ENCODE measurements at regions of chr3 and their contacts with region 1.

Region 1: DNA sequence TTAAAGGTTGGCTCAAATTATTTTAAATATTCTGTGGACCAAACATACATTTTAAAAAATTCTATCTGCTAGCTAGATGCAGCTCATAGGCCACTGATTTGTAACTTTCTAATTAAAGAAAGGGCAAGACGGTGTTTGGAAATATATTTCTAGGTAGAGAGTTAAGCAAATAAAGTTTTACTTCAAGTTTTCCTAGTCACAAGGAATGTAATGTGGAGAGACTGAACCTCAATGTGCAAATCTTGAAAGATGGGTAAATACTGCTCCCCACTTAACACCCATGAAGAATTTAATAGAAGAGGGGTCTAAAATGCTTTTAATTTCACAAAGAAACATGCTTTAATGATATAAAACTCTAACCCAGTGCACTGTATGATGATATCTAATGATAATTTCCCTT is 175.2 kb downstream of the TIGIT start:
- DNase-seq: no peak
- ATAC-seq: no peak
- H3K4me3 ChIP-seq: no peak overlapping the region
- H3K4me3 Mint-ChIP-seq: no peak overlapping the region
- H3K27ac ChIP-seq: no peak overlapping the region
- H3K27ac Mint-ChIP-seq: no peak overlapping the region
- H3K4me1 ChIP-seq: no peaks in the 10 kb centered on the region
- H3K4me1 Mint-ChIP-seq: peaks cover 0 to 17% (median 4%) of the 10 kb centered on the region in 3 donors
- H3K27me3 ChIP-seq: no peaks in the 10 kb centered on the region
- H3K27me3 Mint-ChIP-seq: no peaks in the 10 kb centered on the region

Region 2: DNA sequence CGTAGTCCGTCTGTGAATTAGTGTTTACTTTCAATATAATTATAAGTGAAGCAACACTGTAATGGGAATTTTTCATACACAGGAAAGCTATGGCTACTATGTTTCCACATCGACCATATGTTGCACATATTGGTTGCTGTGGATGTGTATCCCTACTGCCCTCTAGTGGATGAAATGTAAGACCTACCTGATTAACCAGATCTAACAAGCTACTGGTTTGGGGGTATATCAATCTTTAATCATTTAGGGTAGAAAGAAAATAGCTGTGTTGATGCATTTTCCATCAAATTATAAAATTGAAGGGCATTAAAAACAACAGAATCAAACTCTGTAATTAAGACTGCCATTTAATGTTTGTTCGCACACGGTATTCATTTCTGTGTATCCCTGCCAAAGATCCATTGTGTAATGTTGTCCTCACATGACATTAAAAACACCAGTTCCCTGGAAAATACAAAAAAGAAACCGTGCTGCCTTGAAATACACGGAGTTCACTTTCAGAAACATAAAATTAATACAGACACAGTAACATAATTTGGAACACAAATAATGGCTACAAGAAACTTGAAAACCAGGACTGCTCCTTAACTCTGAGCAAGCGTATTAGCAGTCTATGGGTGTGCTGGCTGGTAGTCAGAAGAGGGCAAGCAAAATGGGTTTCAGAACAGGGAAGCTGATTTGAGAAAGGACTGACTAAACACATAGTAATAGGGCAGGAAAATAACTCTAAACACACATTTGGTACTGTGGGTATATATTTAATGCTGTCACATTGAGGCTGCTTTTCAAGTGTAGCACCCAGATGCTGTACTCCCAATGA is 50.1 kb before region 1 on chr3:
- CTCF ChIA-PET with region 1: no interaction called
- POLR2A ChIA-PET with region 1: no interaction called
- DNase-seq: peak in 5 of 35 experiments; percentile 1 to 80 (median 9)
- ATAC-seq: peak; percentile 82 to 88 (median 83)
- H3K4me3 ChIP-seq: no peak overlapping the region
- H3K4me3 Mint-ChIP-seq: no peak overlapping the region
- H3K27ac ChIP-seq: no peak overlapping the region
- H3K27ac Mint-ChIP-seq: no peak overlapping the region
- H3K4me1 ChIP-seq: no peaks in the 10 kb centered on the region
- H3K4me1 Mint-ChIP-seq: peaks cover 6 to 11% (median 10%) of the 10 kb centered on the region in 3 donors
- H3K27me3 ChIP-seq: no peaks in the 10 kb centered on the region
- H3K27me3 Mint-ChIP-seq: no peaks in the 10 kb centered on the region

Region 3: DNA sequence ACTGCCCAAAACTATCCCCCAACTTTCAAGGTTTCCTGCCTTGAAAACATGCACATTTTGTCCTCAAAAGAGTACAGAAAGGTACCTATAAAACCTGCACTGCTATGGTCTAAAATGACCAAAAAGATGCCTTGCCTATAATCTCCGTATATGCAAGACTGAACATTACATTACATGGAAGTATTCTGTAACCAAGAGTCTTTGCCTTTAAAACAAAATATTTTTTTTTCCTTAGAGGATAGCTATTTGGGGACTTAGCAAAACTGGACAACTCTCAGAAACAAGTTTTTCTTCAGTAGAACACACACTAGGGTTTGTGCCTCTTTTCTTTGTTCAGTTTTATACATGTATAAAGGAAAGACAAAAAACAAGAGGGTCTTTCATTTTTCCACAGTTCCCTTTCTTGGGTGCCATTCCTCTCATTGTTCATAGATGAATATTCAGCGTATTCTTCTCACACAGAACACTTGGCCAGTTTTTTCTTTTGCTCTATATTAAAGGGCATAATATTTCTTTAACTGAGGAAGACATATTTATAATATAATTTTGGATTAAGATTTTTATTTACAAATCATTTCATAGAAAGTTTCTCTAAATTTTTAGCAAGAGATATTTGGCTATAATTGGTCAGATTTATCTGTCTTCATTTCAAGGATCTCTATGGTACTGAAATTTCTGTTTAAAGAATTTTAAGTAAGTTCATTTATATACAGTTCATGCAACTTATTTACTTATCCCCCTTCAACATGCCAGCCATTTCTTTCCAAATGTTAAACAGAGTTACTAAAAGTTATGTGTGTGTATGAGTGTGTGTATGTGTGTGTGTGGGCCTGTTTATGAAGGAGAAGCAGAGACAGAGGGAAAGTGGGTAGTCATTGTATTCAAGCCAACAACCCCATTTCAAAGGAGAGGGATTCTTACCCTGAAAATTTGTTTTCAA is 535.4 kb after region 1 on chr3:
- CTCF ChIA-PET with region 1: interaction called in 1 of 2 experiments, 11 read pairs
- POLR2A ChIA-PET with region 1: no interaction called
- DNase-seq: no peak
- ATAC-seq: no peak
- H3K4me3 ChIP-seq: no peak overlapping the region
- H3K4me3 Mint-ChIP-seq: no peak overlapping the region
- H3K27ac ChIP-seq: no peak overlapping the region
- H3K27ac Mint-ChIP-seq: peak overlapping the region in 1 of 2 donors; percentile 48
- H3K4me1 ChIP-seq: no peaks in the 10 kb centered on the region
- H3K4me1 Mint-ChIP-seq: peaks cover 2 to 6% (median 3%) of the 10 kb centered on the region in 3 donors
- H3K27me3 ChIP-seq: no peaks in the 10 kb centered on the region
- H3K27me3 Mint-ChIP-seq: no peaks in the 10 kb centered on the region

Region 4: DNA sequence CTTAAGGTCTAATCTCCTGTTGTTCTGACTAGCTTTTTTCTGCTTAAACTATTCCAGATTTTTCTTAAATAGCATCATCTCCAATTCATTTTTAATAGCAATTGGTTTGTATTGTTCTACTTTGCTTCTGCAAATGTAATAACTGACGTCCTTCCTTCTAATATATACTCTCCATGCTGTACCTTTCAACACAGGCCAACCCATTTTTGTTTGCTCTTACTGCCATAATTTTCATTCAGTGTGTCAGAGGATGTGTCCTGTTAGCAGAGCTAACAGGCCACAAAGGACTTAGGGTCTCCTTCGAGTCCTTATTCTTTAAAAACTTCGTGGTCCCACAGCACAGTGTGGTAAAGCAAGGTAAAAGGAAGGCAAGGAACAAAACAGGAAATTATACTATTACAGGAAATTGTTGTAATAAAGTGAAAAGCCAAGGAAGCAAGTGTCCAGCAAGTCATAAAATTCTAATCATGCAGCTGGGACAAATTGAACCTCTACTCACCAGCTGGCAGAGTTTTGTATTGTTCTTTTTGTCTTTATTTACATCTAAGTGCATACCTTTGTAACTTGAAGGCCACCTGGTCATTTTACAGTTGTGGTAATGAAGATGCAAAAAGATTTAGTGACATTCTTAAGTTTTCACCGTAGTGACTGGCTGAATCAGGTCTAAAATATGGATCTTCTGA is 742.9 kb after region 1 on chr3:
- CTCF ChIA-PET with region 1: no interaction called
- POLR2A ChIA-PET with region 1: interaction called in 1 of 2 experiments, 12 read pairs
- DNase-seq: no peak
- ATAC-seq: no peak
- H3K4me3 ChIP-seq: no peak overlapping the region
- H3K4me3 Mint-ChIP-seq: no peak overlapping the region
- H3K27ac ChIP-seq: no peak overlapping the region
- H3K27ac Mint-ChIP-seq: no peak overlapping the region
- H3K4me1 ChIP-seq: no peaks in the 10 kb centered on the region
- H3K4me1 Mint-ChIP-seq: no peaks in the 10 kb centered on the region
- H3K27me3 ChIP-seq: no peaks in the 10 kb centered on the region
- H3K27me3 Mint-ChIP-seq: peaks cover 0 to 4% of the 10 kb centered on the region in 2 donors